Testis (tissue), 5 donors: ENCODE measurements at regions of chr16 and their contacts with region 1.

Region 1: GRCh38 chr16:50195276-50195675 is 42.2 kb downstream of the TENT4B start:
- DNase-seq: no peak
- H3K4me3 ChIP-seq: no peak overlapping the region
- H3K27ac ChIP-seq: no peak overlapping the region
- H3K4me1 ChIP-seq: no peaks in the 10 kb centered on the region
- H3K27me3 ChIP-seq: no peaks in the 10 kb centered on the region
- CTCF ChIP-seq: no peak
- POLR2A ChIP-seq: no peak

Region 2: DNA sequence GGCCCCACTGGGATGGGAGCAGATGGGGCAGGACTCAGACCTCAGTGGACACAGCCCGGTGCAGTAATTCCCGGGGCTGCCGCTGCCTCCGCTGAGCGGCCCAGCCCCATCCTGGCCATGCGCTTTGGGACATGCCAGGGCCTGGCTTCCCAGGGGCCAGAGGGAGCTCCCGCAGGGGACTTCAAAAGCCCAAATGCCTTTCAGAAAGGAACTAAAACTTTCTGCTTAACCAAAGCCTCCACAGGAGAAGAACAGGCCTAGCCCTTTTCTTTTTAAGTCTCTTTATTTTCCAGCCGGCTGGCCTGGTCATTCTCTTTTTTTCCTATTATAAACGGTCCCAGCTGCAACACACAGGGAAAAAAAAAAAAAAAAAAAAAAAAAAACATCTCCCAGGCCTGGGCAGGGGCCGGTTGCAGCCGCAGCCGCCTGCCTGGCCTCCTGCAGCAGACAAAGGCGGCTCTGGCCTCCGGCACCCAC is 328.6 kb before region 1 on chr16:
- intact Hi-C with region 1: loop called (anchors 10 kb)
- DNase-seq: no peak
- H3K4me3 ChIP-seq: no peak overlapping the region
- H3K27ac ChIP-seq: peak overlapping the region in 1 of 2 donors; percentile 56
- H3K4me1 ChIP-seq: peaks cover 12% of the 10 kb centered on the region
- H3K27me3 ChIP-seq: no peaks in the 10 kb centered on the region
- CTCF ChIP-seq: no peak
- POLR2A ChIP-seq: no peak

Region 3: DNA sequence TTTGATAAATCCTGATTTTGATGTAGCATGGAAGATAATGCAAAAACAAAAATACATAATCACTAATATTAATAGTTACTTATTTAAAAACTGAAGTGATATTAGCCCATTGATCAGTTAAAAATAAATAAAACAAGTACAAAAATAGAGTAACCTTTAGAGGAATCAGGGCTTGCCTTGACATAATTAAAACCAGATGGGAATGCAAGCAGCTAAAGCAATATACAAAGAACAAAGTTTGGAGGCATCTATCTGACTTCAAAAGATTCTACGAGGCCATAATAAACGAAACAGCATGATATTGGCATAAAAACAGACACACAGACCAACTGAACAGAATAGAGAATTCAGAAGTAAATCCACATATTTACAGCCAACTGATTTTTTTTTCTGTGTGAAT is 144.5 kb before region 1 on chr16:
- intact Hi-C with region 1: no loop called
- DNase-seq: no peak
- H3K4me3 ChIP-seq: no peak overlapping the region
- H3K27ac ChIP-seq: no peak overlapping the region
- H3K4me1 ChIP-seq: no peaks in the 10 kb centered on the region
- H3K27me3 ChIP-seq: no peaks in the 10 kb centered on the region
- CTCF ChIP-seq: no peak
- POLR2A ChIP-seq: no peak